ENCODE measurements at regions of chr15 and their contacts with region 1.

Region 1: GRCh38 chr15:57527382-57528091 is 64.2 kb upstream of the MYZAP start:
- DNase-seq: peak in 1 of 5 donors; percentile 26
- H3K4me3 ChIP-seq: no peak overlapping the region
- H3K4me3 Mint-ChIP-seq: no peak overlapping the region
- H3K27ac ChIP-seq: no peak overlapping the region
- H3K27ac Mint-ChIP-seq: no peak overlapping the region
- H3K4me1 ChIP-seq: no peaks in the 10 kb centered on the region
- H3K4me1 Mint-ChIP-seq: no peaks in the 10 kb centered on the region
- H3K27me3 ChIP-seq: no peaks in the 10 kb centered on the region
- H3K27me3 Mint-ChIP-seq: peaks cover 3 to 41% of the 10 kb centered on the region in 2 donors

Region 2: DNA sequence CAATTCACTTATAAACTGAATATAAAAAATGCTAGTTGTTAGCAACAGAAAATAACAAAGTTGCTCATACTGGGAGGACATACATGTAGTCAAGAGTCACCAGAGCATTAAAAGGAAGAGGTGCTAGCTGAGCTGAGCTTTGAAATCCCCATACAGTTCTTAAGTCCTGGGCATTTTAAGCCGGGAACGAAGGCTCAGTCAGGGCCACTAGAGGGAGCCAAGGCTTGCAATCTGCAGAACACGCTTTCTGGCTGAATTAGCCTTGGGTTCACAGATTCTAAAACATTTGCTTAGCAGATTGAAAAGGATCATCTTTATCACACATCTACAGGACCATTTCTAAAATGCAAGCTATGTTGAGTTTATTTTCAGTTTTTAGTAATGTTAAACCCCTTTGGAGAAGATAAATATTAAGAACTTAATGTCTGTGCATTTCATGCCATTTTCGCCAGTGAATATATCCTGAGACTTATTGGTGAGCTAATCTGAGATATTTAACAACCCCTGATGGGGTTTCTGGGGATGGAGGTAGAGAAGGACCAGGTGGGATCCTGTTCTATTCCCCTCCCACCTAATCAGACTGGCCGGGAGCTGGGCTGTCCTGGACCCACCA is 1036.3 kb before region 1 on chr15:
- CTCF ChIA-PET with region 1: interaction called, 12 read pairs
- POLR2A ChIA-PET with region 1: no interaction called
- DNase-seq: peak; percentile 12 to 62 (median 13)
- H3K4me3 ChIP-seq: no peak overlapping the region
- H3K4me3 Mint-ChIP-seq: no peak overlapping the region
- H3K27ac ChIP-seq: no peak overlapping the region
- H3K27ac Mint-ChIP-seq: no peak overlapping the region
- H3K4me1 ChIP-seq: no peaks in the 10 kb centered on the region
- H3K4me1 Mint-ChIP-seq: no peaks in the 10 kb centered on the region
- H3K27me3 ChIP-seq: no peaks in the 10 kb centered on the region
- H3K27me3 Mint-ChIP-seq: peaks cover 8 to 26% of the 10 kb centered on the region in 2 donors

Region 3: GRCh38 chr15:57340682-57341259 is 186.8 kb before region 1 on chr15:
- CTCF ChIA-PET with region 1: interaction called, 21 read pairs
- POLR2A ChIA-PET with region 1: no interaction called
- DNase-seq: no peak
- H3K4me3 ChIP-seq: no peak overlapping the region
- H3K4me3 Mint-ChIP-seq: no peak overlapping the region
- H3K27ac ChIP-seq: no peak overlapping the region
- H3K27ac Mint-ChIP-seq: no peak overlapping the region
- H3K4me1 ChIP-seq: no peaks in the 10 kb centered on the region
- H3K4me1 Mint-ChIP-seq: no peaks in the 10 kb centered on the region
- H3K27me3 ChIP-seq: no peaks in the 10 kb centered on the region
- H3K27me3 Mint-ChIP-seq: peaks cover 9 to 43% of the 10 kb centered on the region in 2 donors